Natural killer cell (primary cell): ENCODE measurements at regions of chr11 and their contacts with region 1.

Region 1: DNA sequence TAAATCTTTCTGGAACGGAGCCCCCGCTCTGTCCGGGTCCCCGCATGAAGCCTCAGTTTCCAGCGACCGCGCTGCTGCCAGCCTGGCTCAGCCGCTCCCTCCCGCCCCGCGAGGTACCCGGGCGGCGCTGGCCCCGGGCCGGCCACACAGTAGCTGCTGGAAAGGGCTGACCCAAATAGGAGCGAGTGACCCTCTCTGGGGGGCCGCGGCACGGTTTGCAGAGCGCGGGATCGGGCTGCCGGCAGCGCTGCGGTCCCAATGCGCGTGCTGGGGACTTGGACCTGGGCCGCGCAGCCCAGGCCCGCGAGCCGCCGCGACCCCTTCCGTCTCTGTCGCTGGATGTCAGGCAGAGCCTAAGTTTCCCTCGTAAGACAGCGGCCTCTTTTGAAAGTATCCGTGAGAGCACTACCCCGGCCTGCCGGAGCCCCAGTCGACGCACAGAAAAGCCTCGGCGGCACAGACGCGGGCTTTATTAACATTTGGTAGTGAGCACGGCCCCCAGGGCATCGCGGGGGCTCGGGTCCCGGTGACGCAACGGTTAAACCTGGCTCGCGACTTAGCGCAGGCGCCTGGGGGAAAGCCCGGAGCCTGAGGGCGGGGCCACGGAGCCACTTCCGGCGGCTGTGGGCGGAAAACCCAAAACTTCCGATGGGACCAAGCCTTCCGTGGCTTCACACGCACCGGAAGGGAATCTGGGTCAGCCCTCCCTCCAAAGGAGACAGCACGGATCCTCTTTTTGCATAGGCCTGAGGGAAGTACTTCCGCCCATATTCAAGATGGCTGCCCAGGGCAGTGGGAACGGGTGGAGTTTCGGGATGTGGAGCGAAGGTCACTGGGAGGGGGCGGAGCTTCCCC is 14.9 kb downstream of the BAD start:
- DNase-seq: peak; percentile 94 to 99
- ATAC-seq: peak; percentile 68 to 83 (median 72)
- H3K4me3 ChIP-seq: peak overlapping the region; percentile 53
- H3K4me3 Mint-ChIP-seq: peak overlapping the region; percentile 97
- H3K27ac ChIP-seq: peak overlapping the region; percentile 92
- H3K27ac Mint-ChIP-seq: peak overlapping the region; percentile 94 to 100
- H3K4me1 ChIP-seq: peaks cover 42% of the 10 kb centered on the region
- H3K4me1 Mint-ChIP-seq: peaks cover 36 to 40% of the 10 kb centered on the region in 2 donors
- H3K27me3 ChIP-seq: no peaks in the 10 kb centered on the region
- H3K27me3 Mint-ChIP-seq: no peaks in the 10 kb centered on the region
- CTCF ChIP-seq: peak; percentile 34

Region 2: DNA sequence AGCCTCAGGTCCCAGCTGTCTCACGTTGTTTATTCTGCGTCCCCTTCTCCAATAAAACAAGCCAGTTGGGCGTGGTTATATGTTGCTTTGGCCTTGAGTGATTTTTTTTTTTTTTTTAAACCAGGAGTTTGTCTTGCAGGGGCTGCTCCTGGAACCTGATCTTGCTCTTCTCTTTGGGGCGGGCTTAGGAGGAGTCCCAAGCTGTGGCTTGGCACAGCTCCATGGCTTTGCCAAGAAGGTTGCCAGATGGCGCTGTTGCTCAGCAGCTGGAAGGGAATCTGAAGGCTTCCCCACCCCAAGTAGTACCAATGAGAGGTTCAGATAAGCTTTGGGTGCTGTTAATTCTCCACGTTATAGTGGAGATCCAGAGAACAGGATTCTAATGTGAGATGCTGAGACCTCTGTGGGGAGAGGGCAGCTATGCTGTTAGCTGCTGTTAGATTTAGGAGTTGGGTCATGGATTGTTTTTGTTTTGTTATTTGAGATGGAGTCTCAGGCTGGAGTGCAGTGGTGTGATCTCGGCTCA is 65.1 kb before region 1 on chr11:
- intact Hi-C with region 1: loop called (anchors 2 kb)
- DNase-seq: peak; percentile 69 to 96
- ATAC-seq: peak; percentile 39 to 60 (median 55)
- H3K4me3 ChIP-seq: no peak overlapping the region
- H3K4me3 Mint-ChIP-seq: peak overlapping the region; percentile 74
- H3K27ac ChIP-seq: no peak overlapping the region
- H3K27ac Mint-ChIP-seq: peak overlapping the region; percentile 77 to 88
- H3K4me1 ChIP-seq: peaks cover 50% of the 10 kb centered on the region
- H3K4me1 Mint-ChIP-seq: peaks cover 28 to 53% of the 10 kb centered on the region in 2 donors
- H3K27me3 ChIP-seq: no peaks in the 10 kb centered on the region
- H3K27me3 Mint-ChIP-seq: no peaks in the 10 kb centered on the region
- CTCF ChIP-seq: peak; percentile 68

Region 3: DNA sequence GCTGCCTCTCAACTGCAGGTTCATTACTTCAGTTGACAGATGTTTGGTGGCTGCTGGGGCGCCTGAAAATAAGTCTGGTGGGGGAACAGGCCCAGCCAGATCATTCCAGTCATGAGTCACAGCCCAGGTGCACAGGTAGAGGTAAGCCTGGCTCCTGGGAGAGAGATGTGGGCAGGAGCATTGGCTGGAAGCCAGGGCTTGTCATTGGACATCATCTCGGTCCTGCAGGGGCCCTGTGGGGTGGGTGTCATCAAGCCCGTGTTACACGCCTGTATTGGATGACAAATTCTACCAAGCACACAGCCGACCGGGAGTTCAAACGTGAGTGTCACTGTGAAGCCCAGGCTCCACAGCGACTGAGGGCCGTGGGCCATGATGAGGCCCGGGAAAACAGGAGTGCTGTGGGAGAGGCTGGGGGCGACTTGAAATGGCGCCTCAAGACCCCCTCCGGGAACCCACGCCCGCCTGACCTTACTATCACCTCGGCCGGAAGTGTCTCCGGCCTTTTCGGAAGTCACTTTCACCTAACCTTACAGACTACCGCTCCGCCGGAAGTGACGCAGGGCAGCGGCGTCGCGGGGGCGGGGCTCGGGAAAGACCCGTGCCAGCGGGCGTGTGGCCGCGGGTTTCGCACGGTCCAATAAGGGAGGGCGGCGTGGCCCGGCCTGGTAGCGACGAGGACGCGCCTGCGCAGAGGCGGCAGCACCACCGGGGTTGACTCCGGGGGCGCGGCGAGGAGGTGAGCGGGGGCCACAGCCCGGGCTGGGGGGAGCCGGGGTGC is 29.0 kb before region 1 on chr11 and contains the start of gene FKBP2:
- intact Hi-C with region 1: loop called (anchors 2 kb)
- DNase-seq: peak; percentile 98 to 99
- ATAC-seq: peak; percentile 65 to 84 (median 73)
- H3K4me3 ChIP-seq: peak within 1 kb of the TSS; percentile 79
- H3K4me3 Mint-ChIP-seq: peak within 1 kb of the TSS; percentile 96
- H3K27ac ChIP-seq: peak within 1 kb of the TSS; percentile 98
- H3K27ac Mint-ChIP-seq: peak within 1 kb of the TSS; percentile 98 to 99
- H3K4me1 ChIP-seq: peaks cover 66% of the 10 kb centered on the region
- H3K4me1 Mint-ChIP-seq: peaks cover 8 to 44% of the 10 kb centered on the region in 2 donors
- H3K27me3 ChIP-seq: no peaks in the 10 kb centered on the region
- H3K27me3 Mint-ChIP-seq: no peaks in the 10 kb centered on the region
- CTCF ChIP-seq: no peak
- total RNA-seq, gene FKBP2: 26.4 to 39.3 (median 30.3) TPM

Region 4: DNA sequence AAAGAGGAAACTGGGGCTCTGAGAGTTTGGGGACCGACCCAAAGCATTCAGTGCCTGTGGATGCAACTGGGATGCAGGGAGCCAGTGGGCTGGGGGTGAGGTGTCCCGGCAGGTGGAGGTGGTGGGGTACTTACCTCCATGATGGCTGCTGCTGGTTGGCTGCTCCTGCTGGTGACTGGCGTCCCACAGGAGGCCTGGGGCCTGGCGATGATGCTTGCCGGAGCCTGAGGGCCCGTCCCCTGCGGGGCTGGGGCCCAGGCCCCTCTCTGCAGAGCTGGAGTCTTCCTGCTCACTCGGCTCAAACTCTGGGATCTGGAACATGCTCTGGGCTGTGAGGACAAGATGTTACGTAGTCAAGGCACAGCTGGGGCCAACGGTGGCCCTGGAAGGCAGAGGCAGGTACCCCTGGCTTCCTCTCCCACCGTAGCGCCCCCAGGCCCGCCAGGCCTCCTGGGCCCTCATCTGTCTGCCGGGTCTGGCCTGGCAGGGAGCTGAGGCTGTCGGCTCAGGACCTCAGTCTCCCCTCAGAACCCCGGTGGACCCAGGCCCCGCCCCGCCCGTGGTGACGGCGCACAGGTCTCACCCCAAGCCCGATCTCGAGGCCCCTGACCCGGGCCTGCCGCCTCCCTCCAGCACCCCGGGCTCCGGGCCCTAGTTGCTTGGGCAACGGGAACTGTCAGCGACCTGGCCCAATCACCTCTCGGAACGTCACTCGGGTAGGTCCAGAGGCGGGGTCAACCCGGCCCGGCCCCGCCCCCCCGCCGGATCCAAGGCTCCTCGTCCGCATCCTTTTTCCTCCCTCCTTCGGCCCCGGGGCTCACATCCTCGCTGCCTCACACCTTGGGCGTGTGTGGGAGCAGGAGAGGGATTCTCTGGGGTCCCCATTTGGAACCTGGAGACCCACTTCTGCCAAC is 14.7 kb after region 1 on chr11 and contains the start of gene BAD:
- intact Hi-C with region 1: loop called (anchors 1 kb)
- DNase-seq: peak; percentile 84 to 94
- ATAC-seq: peak; percentile 76 to 90 (median 78)
- H3K4me3 ChIP-seq: peak within 1 kb of the TSS; percentile 87
- H3K4me3 Mint-ChIP-seq: peak within 1 kb of the TSS; percentile 93
- H3K27ac ChIP-seq: peak within 1 kb of the TSS; percentile 99
- H3K27ac Mint-ChIP-seq: peak within 1 kb of the TSS; percentile 94 to 96
- H3K4me1 ChIP-seq: peaks cover 22% of the 10 kb centered on the region
- H3K4me1 Mint-ChIP-seq: peaks cover 12 to 16% of the 10 kb centered on the region in 2 donors
- H3K27me3 ChIP-seq: no peaks in the 10 kb centered on the region
- H3K27me3 Mint-ChIP-seq: no peaks in the 10 kb centered on the region
- CTCF ChIP-seq: no peak
- total RNA-seq, gene BAD: 30.6 to 35.8 (median 31.6) TPM

Region 5: GRCh38 chr11:64341851-64342791 is 72.5 kb after region 1 on chr11:
- intact Hi-C with region 1: loop called (anchors 2 kb)
- DNase-seq: peak; percentile 91
- ATAC-seq: peak; percentile 66 to 79 (median 67)
- H3K4me3 ChIP-seq: no peak overlapping the region
- H3K4me3 Mint-ChIP-seq: peak overlapping the region; percentile 95
- H3K27ac ChIP-seq: no peak overlapping the region
- H3K27ac Mint-ChIP-seq: peak overlapping the region; percentile 96 to 98
- H3K4me1 ChIP-seq: peaks cover 48% of the 10 kb centered on the region
- H3K4me1 Mint-ChIP-seq: peaks cover 33 to 61% of the 10 kb centered on the region in 2 donors
- H3K27me3 ChIP-seq: no peaks in the 10 kb centered on the region
- H3K27me3 Mint-ChIP-seq: no peaks in the 10 kb centered on the region
- CTCF ChIP-seq: peak; percentile 11